AG04449 (cell line): ENCODE measurements at regions of chr9 and their contacts with region 1.

Region 1: GRCh38 chr9:4375424-4376200 is 75.7 kb upstream of the GLIS3 start:
- DNase-seq: peak; percentile 85
- H3K4me3 ChIP-seq: no peak overlapping the region
- CTCF ChIP-seq: peak; percentile 41

Region 2: GRCh38 chr9:4214486-4214885 is 161.1 kb before region 1 on chr9:
- CTCF ChIA-PET with region 1: no interaction called
- POLR2A ChIA-PET with region 1: no interaction called
- DNase-seq: no peak
- H3K4me3 ChIP-seq: no peak overlapping the region
- CTCF ChIP-seq: no peak

Region 3: DNA sequence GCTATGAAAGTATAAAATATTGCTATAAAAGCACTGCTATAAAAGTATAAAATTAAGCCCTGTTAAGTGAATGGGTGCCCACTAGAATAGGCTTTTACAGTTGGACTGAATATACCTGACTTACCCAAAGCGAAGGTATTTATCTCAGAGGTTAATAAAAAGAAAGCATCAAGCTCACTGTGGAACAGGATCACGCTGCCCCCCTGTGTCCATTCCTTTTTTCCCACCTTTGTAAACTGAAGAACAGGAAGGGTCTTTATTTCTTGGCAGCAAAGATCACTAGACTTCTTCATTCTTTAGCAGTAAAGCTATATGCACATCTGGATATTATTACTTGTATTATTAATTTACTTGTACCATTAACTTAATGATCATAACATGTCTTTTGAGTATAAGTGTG is 264.4 kb after region 1 on chr9:
- CTCF ChIA-PET with region 1: interaction called, 91 read pairs
- POLR2A ChIA-PET with region 1: no interaction called
- DNase-seq: no peak
- H3K4me3 ChIP-seq: no peak overlapping the region
- CTCF ChIP-seq: peak; percentile 53